Breast epithelium (tissue), 4 donors: ENCODE measurements at regions of chr14 and their contacts with region 1.

Region 1: GRCh38 chr14:92974541-92975495 is 51.9 kb downstream of the CHGA start:
- DNase-seq: no peak
- H3K4me3 ChIP-seq: no peak overlapping the region
- H3K27ac ChIP-seq: peak overlapping the region; percentile 61 to 80
- H3K4me1 ChIP-seq: peaks cover 0 to 6% of the 10 kb centered on the region in 2 donors
- H3K27me3 ChIP-seq: no peaks in the 10 kb centered on the region
- CTCF ChIP-seq: no peak
- POLR2A ChIP-seq: no peak

Region 2: GRCh38 chr14:93548102-93548843 is 573.5 kb after region 1 on chr14:
- intact Hi-C with region 1: loop called (anchors 5 kb)
- DNase-seq: no peak
- H3K4me3 ChIP-seq: no peak overlapping the region
- H3K27ac ChIP-seq: no peak overlapping the region
- H3K4me1 ChIP-seq: no peaks in the 10 kb centered on the region
- H3K27me3 ChIP-seq: no peaks in the 10 kb centered on the region
- CTCF ChIP-seq: no peak
- POLR2A ChIP-seq: no peak